IMR-90 (cell line): ENCODE measurements at regions of chr4 and their contacts with region 1.

Region 1: DNA sequence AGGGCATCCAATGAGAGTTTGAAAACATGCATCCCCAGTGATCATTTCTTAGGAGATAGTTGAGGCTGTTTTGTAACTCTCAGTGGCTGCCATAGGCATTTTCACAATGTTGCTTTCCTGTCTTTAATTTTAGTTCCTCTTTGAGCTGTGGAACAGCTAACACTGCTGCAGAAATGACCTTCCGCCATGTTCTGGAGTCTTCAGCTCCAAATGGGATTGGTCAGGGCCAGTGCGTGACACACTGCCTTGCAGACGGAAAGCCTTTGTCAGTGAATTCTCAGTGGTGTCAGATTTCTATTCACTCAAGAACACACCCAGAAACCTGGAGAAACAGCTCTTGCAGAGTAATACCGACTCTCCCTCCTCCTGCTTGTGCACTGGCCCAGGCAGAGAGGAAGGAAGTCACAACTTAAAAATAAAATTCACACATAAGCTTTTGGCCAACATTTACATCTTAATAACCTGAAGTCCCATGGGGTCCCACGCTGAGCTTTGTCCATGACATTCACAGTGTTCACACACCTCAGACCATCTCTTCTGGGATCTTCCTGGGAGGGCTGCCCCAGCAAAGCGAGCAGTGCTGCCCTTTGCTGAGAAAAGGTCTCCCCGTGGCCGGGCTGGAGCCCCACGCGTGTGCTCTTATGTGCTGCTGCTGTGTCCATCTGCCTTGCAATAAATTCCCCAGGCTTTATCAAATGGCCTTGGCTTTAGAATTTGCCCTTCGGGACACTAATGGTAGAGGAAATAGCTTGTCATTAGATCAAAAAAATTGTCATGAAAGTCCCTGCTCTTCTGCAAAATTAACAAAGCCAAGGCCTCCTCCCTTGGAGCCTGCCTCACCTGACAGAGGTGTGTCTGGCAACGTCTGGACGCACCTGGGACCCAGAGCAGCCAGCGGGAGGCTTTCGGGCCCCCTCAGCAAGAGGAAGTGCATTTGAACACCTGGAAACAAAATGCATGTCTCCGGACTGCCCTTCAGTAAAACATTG is 126.8 kb downstream of the IRF2 start:
- DNase-seq: peak; percentile 68
- ATAC-seq: no peak
- H3K4me3 ChIP-seq: no peak overlapping the region
- H3K27ac ChIP-seq: peak overlapping the region; percentile 82; the same call in 1 of the 2 replicates
- H3K4me1 ChIP-seq: peaks cover 26% of the 10 kb centered on the region
- H3K27me3 ChIP-seq: no peaks in the 10 kb centered on the region
- CTCF ChIP-seq: no peak
- POLR2A ChIP-seq: no peak
- RAD21 ChIP-seq: no peak

Region 2: DNA sequence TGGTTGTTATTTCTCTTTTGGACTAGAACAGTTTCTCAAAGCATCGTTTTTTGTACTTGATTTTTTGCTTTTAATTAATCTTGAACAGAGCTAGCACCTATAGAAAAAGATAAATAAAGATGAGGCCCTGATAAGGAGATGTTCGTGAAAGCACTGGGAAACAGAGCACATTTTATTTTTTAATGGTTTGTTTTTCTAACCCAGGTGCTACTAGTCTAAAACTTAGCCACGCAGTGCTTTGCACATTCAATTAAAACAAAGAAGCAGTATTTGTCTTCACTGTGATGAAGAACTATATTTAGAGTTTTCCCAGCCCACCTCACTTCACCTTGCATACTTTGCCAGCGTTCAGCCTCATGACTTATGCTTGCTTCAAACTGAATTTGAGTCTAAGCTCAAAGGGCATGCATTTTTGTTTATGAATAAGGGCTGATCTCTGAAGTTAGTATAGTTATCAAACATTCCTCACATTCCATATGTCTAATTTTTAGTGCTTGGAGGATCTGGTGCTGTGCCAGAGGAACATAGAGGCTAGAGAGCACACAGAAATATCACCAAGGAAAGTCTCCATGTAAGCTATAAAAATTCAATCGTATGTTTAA is 1171.8 kb before region 1 on chr4:
- CTCF ChIA-PET with region 1: no interaction called
- POLR2A ChIA-PET with region 1: no interaction called
- dilution Hi-C with region 1: no loop called
- in situ Hi-C with region 1: no loop called
- intact Hi-C with region 1: no loop called
- DNase-seq: peak; percentile 60
- ATAC-seq: peak; percentile 76
- H3K4me3 ChIP-seq: no peak overlapping the region
- H3K27ac ChIP-seq: no peak overlapping the region
- H3K4me1 ChIP-seq: peaks cover 20% of the 10 kb centered on the region
- H3K27me3 ChIP-seq: no peaks in the 10 kb centered on the region
- CTCF ChIP-seq: no peak
- POLR2A ChIP-seq: no peak
- RAD21 ChIP-seq: no peak

Region 3: DNA sequence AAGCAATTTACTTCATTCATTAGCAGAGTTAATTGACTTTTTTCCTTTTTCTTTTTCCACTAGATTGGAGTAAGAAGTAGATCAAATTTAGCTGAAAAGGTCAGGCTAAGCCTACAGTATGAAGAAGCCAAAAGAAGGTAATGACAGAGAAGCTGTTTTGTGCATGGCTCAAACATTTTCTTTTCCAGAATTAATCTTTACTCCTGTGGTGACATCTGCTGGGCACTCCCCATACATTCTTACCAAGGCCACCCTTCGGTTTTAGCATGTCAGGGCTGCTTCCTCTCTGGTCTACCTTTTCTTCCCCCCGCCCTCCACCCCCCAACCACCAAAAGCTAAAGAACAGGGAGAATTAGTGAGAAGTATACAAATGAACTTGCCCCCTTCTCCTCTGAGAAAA is 1097.7 kb before region 1 on chr4:
- CTCF ChIA-PET with region 1: no interaction called
- POLR2A ChIA-PET with region 1: no interaction called
- dilution Hi-C with region 1: no loop called
- in situ Hi-C with region 1: no loop called
- intact Hi-C with region 1: no loop called
- DNase-seq: peak; percentile 52
- ATAC-seq: peak; percentile 75
- H3K4me3 ChIP-seq: no peak overlapping the region
- H3K27ac ChIP-seq: no peak overlapping the region
- H3K4me1 ChIP-seq: no peaks in the 10 kb centered on the region
- H3K27me3 ChIP-seq: no peaks in the 10 kb centered on the region
- CTCF ChIP-seq: peak; percentile 57
- POLR2A ChIP-seq: no peak
- RAD21 ChIP-seq: peak; percentile 68

Region 4: GRCh38 chr4:184201179-184201578 is 146.4 kb before region 1 on chr4:
- CTCF ChIA-PET with region 1: no interaction called
- POLR2A ChIA-PET with region 1: no interaction called
- dilution Hi-C with region 1: no loop called
- in situ Hi-C with region 1: no loop called
- intact Hi-C with region 1: no loop called
- DNase-seq: no peak
- ATAC-seq: no peak
- H3K4me3 ChIP-seq: no peak overlapping the region
- H3K27ac ChIP-seq: no peak overlapping the region
- H3K4me1 ChIP-seq: no peaks in the 10 kb centered on the region
- H3K27me3 ChIP-seq: peaks cover 3% of the 10 kb centered on the region; the same call in 1 of the 2 replicates
- CTCF ChIP-seq: no peak
- POLR2A ChIP-seq: no peak
- RAD21 ChIP-seq: no peak

Region 5: GRCh38 chr4:184306470-184306869 is 41.1 kb before region 1 on chr4:
- CTCF ChIA-PET with region 1: interaction called, 3 read pairs
- POLR2A ChIA-PET with region 1: interaction called, 18 read pairs
- dilution Hi-C with region 1: no loop called
- in situ Hi-C with region 1: no loop called
- intact Hi-C with region 1: no loop called
- DNase-seq: no peak
- ATAC-seq: no peak
- H3K4me3 ChIP-seq: no peak overlapping the region
- H3K27ac ChIP-seq: no peak overlapping the region
- H3K4me1 ChIP-seq: no peaks in the 10 kb centered on the region
- H3K27me3 ChIP-seq: no peaks in the 10 kb centered on the region
- CTCF ChIP-seq: no peak
- POLR2A ChIP-seq: no peak
- RAD21 ChIP-seq: no peak

Region 6: GRCh38 chr4:184384056-184384809 is 36.7 kb after region 1 on chr4:
- CTCF ChIA-PET with region 1: no interaction called
- POLR2A ChIA-PET with region 1: no interaction called
- dilution Hi-C with region 1: no loop called
- in situ Hi-C with region 1: no loop called
- intact Hi-C with region 1: loop called (anchors 2 kb)
- DNase-seq: peak; percentile 96
- ATAC-seq: peak; percentile 78
- H3K4me3 ChIP-seq: peak overlapping the region; percentile 17; the same call in 1 of the 2 replicates
- H3K27ac ChIP-seq: peak overlapping the region; percentile 92
- H3K4me1 ChIP-seq: peaks cover 27% of the 10 kb centered on the region
- H3K27me3 ChIP-seq: no peaks in the 10 kb centered on the region
- CTCF ChIP-seq: no peak
- POLR2A ChIP-seq: peak; percentile 41; the same call in 1 of the 2 replicates
- RAD21 ChIP-seq: 0 out of 2 replicates have a peak, but pooled peaks have one; percentile 3

Region 7: DNA sequence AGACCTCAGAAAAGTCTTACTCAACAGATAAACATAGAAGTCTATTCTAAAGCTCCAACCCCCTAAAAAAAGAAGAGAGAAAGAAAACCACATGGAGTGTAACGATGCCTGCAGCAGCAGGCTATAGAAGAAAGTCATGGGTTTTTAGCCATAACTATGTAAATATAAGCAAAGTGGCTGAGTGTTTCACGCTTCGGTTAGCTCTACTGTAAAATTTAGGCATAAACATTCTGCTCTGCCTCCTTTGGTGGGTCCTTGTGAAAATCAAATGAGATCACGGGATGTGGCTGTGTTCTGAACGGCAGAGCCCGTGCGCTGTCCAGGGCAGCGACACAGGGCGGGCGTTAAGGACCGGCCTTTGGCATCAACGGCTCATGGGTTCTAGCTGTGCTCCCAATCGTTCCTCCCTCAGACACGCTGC is 48.4 kb after region 1 on chr4:
- CTCF ChIA-PET with region 1: no interaction called
- POLR2A ChIA-PET with region 1: no interaction called
- dilution Hi-C with region 1: no loop called
- in situ Hi-C with region 1: no loop called
- intact Hi-C with region 1: no loop called
- DNase-seq: no peak
- ATAC-seq: no peak
- H3K4me3 ChIP-seq: no peak overlapping the region
- H3K27ac ChIP-seq: no peak overlapping the region
- H3K4me1 ChIP-seq: peaks cover 6% of the 10 kb centered on the region; the same call in 1 of the 2 replicates
- H3K27me3 ChIP-seq: no peaks in the 10 kb centered on the region
- CTCF ChIP-seq: no peak
- POLR2A ChIP-seq: no peak
- RAD21 ChIP-seq: no peak